Calu3 (cell line): ENCODE measurements at regions of chr9 and their contacts with region 1.

Region 1: GRCh38 chr9:75728391-75728790 is 162.1 kb upstream of the PCSK5 start:
- DNase-seq: no peak
- H3K4me3 Mint-ChIP-seq: no peak overlapping the region
- H3K27ac Mint-ChIP-seq: no peak overlapping the region
- H3K4me1 Mint-ChIP-seq: no peaks in the 10 kb centered on the region
- H3K27me3 Mint-ChIP-seq: peaks cover 31% of the 10 kb centered on the region
- CTCF ChIP-seq: no peak

Region 2: DNA sequence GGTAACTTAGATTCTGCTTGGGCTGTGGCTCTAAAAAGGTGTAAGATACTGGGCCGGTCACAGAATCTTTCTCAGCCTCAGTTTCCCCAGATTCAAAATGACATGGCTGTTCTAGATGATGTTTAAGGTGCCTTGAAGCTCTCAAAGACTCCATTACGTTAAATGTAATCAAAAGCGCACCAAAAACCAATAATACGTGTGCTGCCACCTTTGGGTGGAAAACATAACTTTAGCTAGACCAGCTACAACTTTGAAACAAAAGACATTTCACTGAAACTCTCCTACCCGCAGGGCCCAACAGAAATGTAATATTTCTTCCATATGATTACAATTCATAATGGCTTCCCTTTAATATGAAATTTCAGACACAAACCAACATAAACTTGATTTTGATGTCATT is 127.1 kb after region 1 on chr9:
- CTCF ChIA-PET with region 1: no interaction called
- intact Hi-C with region 1: loop called (anchors 2 kb)
- DNase-seq: peak; percentile 22
- H3K4me3 Mint-ChIP-seq: no peak overlapping the region
- H3K27ac Mint-ChIP-seq: no peak overlapping the region
- H3K4me1 Mint-ChIP-seq: no peaks in the 10 kb centered on the region
- H3K27me3 Mint-ChIP-seq: no peaks in the 10 kb centered on the region
- CTCF ChIP-seq: no peak

Region 3: GRCh38 chr9:76013809-76014208 is 285.4 kb after region 1 on chr9:
- CTCF ChIA-PET with region 1: no interaction called
- intact Hi-C with region 1: no loop called
- DNase-seq: no peak
- H3K4me3 Mint-ChIP-seq: no peak overlapping the region
- H3K27ac Mint-ChIP-seq: no peak overlapping the region
- H3K4me1 Mint-ChIP-seq: peaks cover 12% of the 10 kb centered on the region
- H3K27me3 Mint-ChIP-seq: no peaks in the 10 kb centered on the region
- CTCF ChIP-seq: no peak